Tibial artery (tissue), 4 donors: ENCODE measurements at regions of chr1 and their contacts with region 1.

Region 1: DNA sequence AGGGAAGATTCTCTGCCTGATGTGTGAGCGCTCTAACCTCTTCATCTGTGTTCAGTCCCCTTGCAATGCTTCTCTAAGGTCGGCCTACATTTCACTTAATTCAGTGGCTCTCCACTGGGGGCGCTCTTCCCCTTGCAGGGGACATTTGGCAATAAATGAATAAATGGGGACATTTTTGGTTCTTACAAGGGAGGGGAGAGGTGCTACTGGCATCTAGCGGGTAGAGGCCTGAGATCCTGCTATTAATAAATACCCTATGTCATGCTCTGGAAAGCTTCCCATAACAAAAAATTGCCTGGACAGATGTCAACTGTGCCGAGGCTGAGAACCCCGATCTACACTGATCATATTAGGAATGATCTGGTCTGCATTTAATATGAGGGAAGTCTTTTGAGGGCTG is 25.9 kb upstream of the DNAJC11 start:
- DNase-seq: peak; percentile 74 to 75
- H3K4me3 ChIP-seq: no peak overlapping the region
- H3K27ac ChIP-seq: no peak overlapping the region
- H3K4me1 ChIP-seq: peaks cover 0 to 17% (median 0%) of the 10 kb centered on the region in 4 donors
- H3K27me3 ChIP-seq: no peaks in the 10 kb centered on the region
- CTCF ChIP-seq: peak; percentile 81 to 89

Region 2: DNA sequence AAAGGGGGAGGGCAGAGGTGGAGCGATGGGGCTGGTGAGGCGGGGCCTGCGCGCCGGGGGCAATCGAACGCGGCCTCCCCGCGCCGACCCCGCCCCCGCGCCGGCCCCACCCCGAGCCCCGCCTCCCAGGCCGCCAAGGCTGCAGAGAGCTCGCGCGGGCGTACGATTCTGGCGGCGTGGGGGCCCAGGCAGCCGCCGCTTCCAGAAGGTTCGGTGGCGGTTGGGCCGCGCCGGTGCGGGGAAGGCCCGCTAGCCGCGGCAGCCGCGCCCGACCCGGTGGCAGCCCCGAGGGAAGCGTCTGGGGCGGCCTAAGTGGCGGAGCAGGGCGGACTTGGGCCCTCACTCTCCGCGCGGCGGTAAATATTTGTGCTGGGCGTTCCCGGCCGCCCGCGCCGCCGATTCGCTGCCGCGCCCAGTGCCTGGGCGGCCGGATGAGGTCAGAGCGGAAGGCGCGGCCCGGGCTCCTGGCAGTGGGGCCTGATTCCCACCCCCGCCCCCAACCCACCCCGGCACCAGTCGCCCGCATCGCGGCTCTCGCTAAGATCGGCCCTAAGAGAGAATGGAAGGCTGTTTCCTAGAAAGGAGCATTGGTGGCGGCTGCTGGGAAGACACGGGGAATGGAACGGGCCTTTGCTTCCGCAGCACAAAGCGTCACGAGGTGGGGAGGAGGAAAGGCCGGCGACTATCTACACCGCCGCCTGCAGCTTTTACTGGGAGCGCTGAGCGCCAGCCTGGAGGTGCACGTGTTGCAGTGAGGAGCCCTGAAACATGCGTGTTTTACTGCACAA is 333.9 kb before region 1 on chr1 and contains the start of gene ACOT7:
- intact Hi-C with region 1: no loop called
- DNase-seq: peak; percentile 83 to 92
- H3K4me3 ChIP-seq: peak within 1 kb of the TSS; percentile 58 to 73
- H3K27ac ChIP-seq: peak within 1 kb of the TSS; percentile 92 to 97
- H3K4me1 ChIP-seq: peaks cover 0 to 18% (median 12%) of the 10 kb centered on the region in 4 donors
- H3K27me3 ChIP-seq: peaks cover 0 to 2% of the 10 kb centered on the region in 2 donors
- CTCF ChIP-seq: peak in 1 of 2 experiments; percentile 21

Region 3: GRCh38 chr1:6454856-6455751 is 272.4 kb before region 1 on chr1:
- intact Hi-C with region 1: no loop called
- DNase-seq: no peak
- H3K4me3 ChIP-seq: no peak overlapping the region
- H3K27ac ChIP-seq: no peak overlapping the region
- H3K4me1 ChIP-seq: peaks cover 0 to 18% (median 10%) of the 10 kb centered on the region in 4 donors
- H3K27me3 ChIP-seq: peaks cover 0 to 90% of the 10 kb centered on the region in 2 donors
- CTCF ChIP-seq: no peak

Region 4: GRCh38 chr1:6889875-6890480 is 162.4 kb after region 1 on chr1:
- intact Hi-C with region 1: loop called (anchors 10 kb)
- DNase-seq: peak in 1 of 2 donors; percentile 48
- H3K4me3 ChIP-seq: no peak overlapping the region
- H3K27ac ChIP-seq: no peak overlapping the region
- H3K4me1 ChIP-seq: peaks cover 0 to 11% (median 0%) of the 10 kb centered on the region in 4 donors
- H3K27me3 ChIP-seq: no peaks in the 10 kb centered on the region
- CTCF ChIP-seq: peak; percentile 76 to 80

Region 5: GRCh38 chr1:7207875-7208646 is 480.5 kb after region 1 on chr1:
- intact Hi-C with region 1: loop called (anchors 5 kb)
- DNase-seq: no peak
- H3K4me3 ChIP-seq: no peak overlapping the region
- H3K27ac ChIP-seq: no peak overlapping the region
- H3K4me1 ChIP-seq: no peaks in the 10 kb centered on the region
- H3K27me3 ChIP-seq: peaks cover 0 to 20% of the 10 kb centered on the region in 2 donors
- CTCF ChIP-seq: peak in 1 of 2 experiments; percentile 20